ENCODE measurements at regions of chr12 and their contacts with region 1.

Region 1: DNA sequence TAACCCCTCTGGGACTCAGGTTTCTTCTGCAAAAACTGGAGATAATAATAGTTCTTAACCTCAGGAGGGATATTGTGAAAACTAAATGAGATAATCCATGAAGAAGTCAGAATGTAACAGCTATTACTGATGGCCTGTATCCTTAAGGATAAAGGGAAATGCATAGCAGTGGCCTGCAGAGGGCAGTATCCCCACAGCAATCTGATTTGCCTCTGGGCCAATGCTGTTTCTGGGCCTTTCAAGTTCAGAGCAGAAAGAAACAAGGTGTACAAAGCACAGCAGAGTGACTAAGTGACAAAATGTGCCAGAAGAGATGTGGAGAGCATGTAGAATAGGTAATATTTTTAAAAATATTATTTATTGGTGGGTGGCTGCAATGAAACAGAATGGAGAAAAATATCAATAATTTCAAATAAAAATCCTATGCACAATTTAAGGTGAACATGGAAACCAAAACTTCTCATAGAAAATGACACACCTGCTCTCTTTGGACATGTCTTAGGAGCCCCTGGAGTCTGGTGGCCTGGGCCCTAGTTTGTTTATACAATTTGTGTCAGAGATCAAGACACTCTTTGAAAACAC is 90.3 kb downstream of the C12orf75 start:
- DNase-seq: peak; percentile 70 to 77 (median 74)
- ATAC-seq: peak; percentile 63 to 93 (median 90)
- H3K4me3 ChIP-seq: no peak overlapping the region
- H3K27ac ChIP-seq: peak overlapping the region in 1 of 12 donors; percentile 20
- H3K4me1 ChIP-seq: peaks cover 0 to 6% (median 0%) of the 10 kb centered on the region in 12 donors
- H3K27me3 ChIP-seq: no peaks in the 10 kb centered on the region
- CTCF ChIP-seq: peak; percentile 84 to 94 (median 92)
- POLR2A ChIP-seq: no peak

Region 2: GRCh38 chr12:105358789-105359188 is 62.0 kb before region 1 on chr12:
- intact Hi-C with region 1: no loop called
- DNase-seq: peak in 1 of 5 donors; percentile 26
- ATAC-seq: peak in 2 of 4 donors; percentile 49 to 67
- H3K4me3 ChIP-seq: no peak overlapping the region
- H3K27ac ChIP-seq: peak overlapping the region in 1 of 12 donors; percentile 26
- H3K4me1 ChIP-seq: no peaks in the 10 kb centered on the region
- H3K27me3 ChIP-seq: no peaks in the 10 kb centered on the region
- CTCF ChIP-seq: no peak
- POLR2A ChIP-seq: no peak

Region 3: GRCh38 chr12:105580821-105581352 is 160.1 kb after region 1 on chr12:
- intact Hi-C with region 1: loop called in 1 of 10 experiments (anchors 10 kb)
- DNase-seq: no peak
- ATAC-seq: peak in 3 of 4 donors; percentile 43 to 51 (median 50)
- H3K4me3 ChIP-seq: no peak overlapping the region
- H3K27ac ChIP-seq: peak overlapping the region in 1 of 12 donors; percentile 16
- H3K4me1 ChIP-seq: peaks cover 0 to 10% (median 0%) of the 10 kb centered on the region in 12 donors
- H3K27me3 ChIP-seq: no peaks in the 10 kb centered on the region
- CTCF ChIP-seq: no peak
- POLR2A ChIP-seq: no peak

Region 4: DNA sequence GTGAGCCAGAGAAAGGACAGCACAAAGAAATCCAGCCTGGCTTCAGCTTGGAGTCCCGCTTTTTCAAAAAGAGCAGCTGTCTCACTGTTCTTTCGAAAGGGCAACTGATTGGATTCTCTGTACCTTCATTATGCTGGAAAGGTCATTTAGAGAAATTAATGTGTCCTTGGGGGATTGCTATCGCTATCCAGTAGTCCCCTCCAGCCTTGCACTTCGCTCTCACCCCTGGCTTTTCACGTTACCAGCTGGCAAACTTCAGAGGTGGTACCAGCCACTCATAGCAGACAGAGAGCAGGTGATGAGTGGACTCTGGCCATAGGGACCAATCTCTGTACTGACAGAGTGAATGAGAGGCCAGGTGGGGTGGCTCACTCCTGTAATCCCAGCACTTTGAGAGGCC is 729.8 kb after region 1 on chr12:
- intact Hi-C with region 1: loop called in 1 of 10 experiments (anchors 5 kb)
- DNase-seq: no peak
- ATAC-seq: no peak
- H3K4me3 ChIP-seq: no peak overlapping the region
- H3K27ac ChIP-seq: no peak overlapping the region
- H3K4me1 ChIP-seq: peaks cover 4 to 33% (median 14%) of the 10 kb centered on the region in 12 donors
- H3K27me3 ChIP-seq: no peaks in the 10 kb centered on the region
- CTCF ChIP-seq: no peak
- POLR2A ChIP-seq: no peak

Region 5: DNA sequence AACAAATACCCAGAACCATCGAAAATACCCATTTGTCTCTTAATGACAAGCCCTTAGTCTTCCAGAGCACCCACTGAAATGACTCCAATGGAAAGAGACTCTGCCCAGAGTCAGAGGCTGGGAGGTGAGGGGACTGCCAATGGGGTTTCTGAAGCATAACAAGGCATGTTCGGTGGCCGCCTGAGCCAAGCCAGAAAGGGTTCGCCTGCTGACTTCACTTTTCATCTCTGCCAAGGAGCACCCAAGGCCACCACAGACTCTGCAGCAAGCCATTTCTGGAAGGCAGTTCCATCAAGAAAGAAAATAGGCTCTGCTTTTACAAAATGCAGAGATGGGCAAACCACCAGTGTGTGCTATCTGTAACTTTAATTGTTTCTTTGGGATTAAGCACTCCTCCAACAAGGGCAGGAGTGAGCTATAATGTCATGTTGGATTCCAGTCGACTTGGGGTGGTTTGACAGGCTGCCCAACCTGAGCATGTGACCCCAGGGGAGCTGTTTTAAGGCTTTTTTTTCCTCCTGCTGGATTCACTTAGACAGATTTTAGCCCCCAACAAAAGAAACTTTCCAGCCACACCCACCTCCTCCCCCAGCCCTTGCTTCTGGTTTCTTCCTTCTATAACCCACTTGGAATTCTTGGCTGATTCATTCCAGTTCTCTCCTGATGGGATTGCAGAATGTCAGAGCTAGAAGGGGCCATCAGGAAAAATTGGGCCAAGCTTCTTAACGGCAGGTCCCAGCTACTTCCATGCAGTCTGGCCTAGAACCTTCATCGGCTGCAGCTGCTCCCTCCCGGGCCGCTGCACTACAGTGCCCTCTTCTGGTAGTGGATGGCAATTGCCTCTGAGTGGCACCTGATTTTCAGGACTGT is 803.0 kb after region 1 on chr12:
- intact Hi-C with region 1: loop called (anchors 1 to 5 kb)
- DNase-seq: peak; percentile 68 to 79 (median 74)
- ATAC-seq: peak; percentile 38 to 79 (median 75)
- H3K4me3 ChIP-seq: no peak overlapping the region
- H3K27ac ChIP-seq: no peak overlapping the region
- H3K4me1 ChIP-seq: peaks cover 0 to 19% (median 8%) of the 10 kb centered on the region in 12 donors
- H3K27me3 ChIP-seq: no peaks in the 10 kb centered on the region
- CTCF ChIP-seq: peak; percentile 92 to 98 (median 94)
- POLR2A ChIP-seq: no peak